ENCODE measurements at regions of chr6 and their contacts with region 1.

Region 1: GRCh38 chr6:87066449-87067333 is 28.2 kb downstream of the CGA start:
- DNase-seq: peak; percentile 30
- ATAC-seq: no peak
- H3K4me3 ChIP-seq: no peak overlapping the region
- H3K27ac ChIP-seq: no peak overlapping the region
- H3K4me1 ChIP-seq: no peaks in the 10 kb centered on the region
- H3K27me3 ChIP-seq: peaks cover 11% of the 10 kb centered on the region; the same call in 1 of the 2 replicates
- CTCF ChIP-seq: peak; percentile 68; the same call in 1 of the 2 replicates

Region 2: GRCh38 chr6:86848986-86849385 is 217.7 kb before region 1 on chr6:
- CTCF ChIA-PET with region 1: no interaction called
- POLR2A ChIA-PET with region 1: no interaction called
- in situ Hi-C with region 1: no loop called
- intact Hi-C with region 1: no loop called
- DNase-seq: no peak
- ATAC-seq: no peak
- H3K4me3 ChIP-seq: no peak overlapping the region
- H3K27ac ChIP-seq: no peak overlapping the region
- H3K4me1 ChIP-seq: no peaks in the 10 kb centered on the region
- H3K27me3 ChIP-seq: no peaks in the 10 kb centered on the region
- CTCF ChIP-seq: no peak

Region 3: DNA sequence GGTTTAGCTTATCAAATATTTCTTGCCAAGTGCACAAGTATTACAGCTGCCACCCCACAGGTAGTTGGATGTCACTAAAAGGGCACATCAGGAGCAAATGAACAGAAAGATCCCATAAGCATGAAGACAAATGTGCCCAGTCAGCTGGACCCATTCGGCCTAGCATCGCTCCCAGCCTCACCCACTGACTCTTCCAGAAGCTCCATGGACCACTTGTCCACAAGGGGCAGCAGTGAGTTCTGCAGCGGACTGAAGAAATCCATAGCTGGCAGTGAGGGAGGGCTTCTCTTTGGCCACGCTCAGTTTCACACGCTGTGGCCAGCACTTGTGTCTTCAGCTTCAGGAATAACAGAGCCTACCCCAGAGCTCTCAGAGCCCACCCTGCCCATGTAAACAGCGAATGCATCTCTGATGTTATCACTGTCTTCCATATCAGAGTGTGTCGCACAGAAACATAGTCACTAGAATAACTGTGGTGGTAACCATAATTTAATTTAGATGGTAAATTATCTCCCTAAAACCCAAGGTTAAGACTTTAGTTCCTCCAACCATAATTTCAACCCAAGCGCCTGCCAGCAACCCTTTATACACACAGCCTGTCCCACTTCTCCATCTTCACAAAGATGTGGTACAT is 12.4 kb after region 1 on chr6:
- CTCF ChIA-PET with region 1: interaction called, 17 read pairs
- POLR2A ChIA-PET with region 1: interaction called, 4 read pairs
- in situ Hi-C with region 1: no loop called
- intact Hi-C with region 1: no loop called
- DNase-seq: peak; percentile 42
- ATAC-seq: peak; percentile 98
- H3K4me3 ChIP-seq: no peak overlapping the region
- H3K27ac ChIP-seq: no peak overlapping the region
- H3K4me1 ChIP-seq: no peaks in the 10 kb centered on the region
- H3K27me3 ChIP-seq: peaks cover 6% of the 10 kb centered on the region; the same call in 1 of the 2 replicates
- CTCF ChIP-seq: peak; percentile 97

Region 4: DNA sequence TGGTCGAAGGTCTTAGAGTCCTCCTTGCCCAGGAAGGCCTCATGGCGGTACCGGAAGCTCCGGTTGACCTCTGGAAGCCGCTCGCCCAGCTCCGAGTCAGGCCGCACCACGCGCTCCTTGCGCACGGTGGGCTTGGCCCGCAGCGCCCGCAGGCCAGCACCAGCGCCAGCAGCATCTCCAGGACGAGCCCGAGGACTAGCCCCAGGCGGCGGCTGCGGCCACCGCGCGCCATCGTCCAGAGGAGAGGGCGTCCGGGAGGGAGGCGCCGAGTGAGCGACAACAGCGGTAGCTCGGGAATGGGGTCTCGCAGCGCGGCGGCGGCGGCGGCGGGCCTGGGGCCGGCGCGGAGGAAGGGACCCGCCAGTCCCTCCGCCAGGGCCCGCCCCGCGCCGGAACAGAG is 55.8 kb after region 1 on chr6:
- CTCF ChIA-PET with region 1: no interaction called
- POLR2A ChIA-PET with region 1: interaction called, 14 read pairs
- in situ Hi-C with region 1: no loop called
- intact Hi-C with region 1: no loop called
- DNase-seq: no peak
- ATAC-seq: no peak
- H3K4me3 ChIP-seq: no peak overlapping the region
- H3K27ac ChIP-seq: no peak overlapping the region
- H3K4me1 ChIP-seq: no peaks in the 10 kb centered on the region
- H3K27me3 ChIP-seq: peaks cover 2% of the 10 kb centered on the region; the same call in 1 of the 2 replicates
- CTCF ChIP-seq: no peak

Region 5: DNA sequence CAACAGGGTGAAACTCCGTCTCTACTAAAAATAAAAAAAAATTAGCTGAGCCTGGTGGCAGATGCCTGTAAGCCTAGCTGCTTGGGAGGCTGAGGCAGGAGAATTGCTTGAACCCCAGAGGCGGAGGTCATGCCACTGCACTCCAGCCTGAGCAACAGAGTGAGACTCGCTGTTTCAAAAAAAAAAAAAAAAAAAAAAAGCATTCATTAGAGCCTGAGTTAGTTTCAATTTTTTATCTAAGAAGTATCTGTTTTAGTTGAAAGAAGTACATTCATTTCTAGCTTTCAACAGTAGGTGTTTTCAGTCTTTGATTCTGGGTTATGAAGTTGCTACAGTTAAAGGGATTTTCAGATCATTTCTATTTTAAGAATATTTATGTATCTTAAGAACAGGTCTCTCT is 130.9 kb after region 1 on chr6:
- CTCF ChIA-PET with region 1: no interaction called
- POLR2A ChIA-PET with region 1: no interaction called
- in situ Hi-C with region 1: no loop called
- intact Hi-C with region 1: no loop called
- DNase-seq: no peak
- ATAC-seq: no peak
- H3K4me3 ChIP-seq: no peak overlapping the region
- H3K27ac ChIP-seq: no peak overlapping the region
- H3K4me1 ChIP-seq: no peaks in the 10 kb centered on the region
- H3K27me3 ChIP-seq: no peaks in the 10 kb centered on the region
- CTCF ChIP-seq: no peak

Region 6: DNA sequence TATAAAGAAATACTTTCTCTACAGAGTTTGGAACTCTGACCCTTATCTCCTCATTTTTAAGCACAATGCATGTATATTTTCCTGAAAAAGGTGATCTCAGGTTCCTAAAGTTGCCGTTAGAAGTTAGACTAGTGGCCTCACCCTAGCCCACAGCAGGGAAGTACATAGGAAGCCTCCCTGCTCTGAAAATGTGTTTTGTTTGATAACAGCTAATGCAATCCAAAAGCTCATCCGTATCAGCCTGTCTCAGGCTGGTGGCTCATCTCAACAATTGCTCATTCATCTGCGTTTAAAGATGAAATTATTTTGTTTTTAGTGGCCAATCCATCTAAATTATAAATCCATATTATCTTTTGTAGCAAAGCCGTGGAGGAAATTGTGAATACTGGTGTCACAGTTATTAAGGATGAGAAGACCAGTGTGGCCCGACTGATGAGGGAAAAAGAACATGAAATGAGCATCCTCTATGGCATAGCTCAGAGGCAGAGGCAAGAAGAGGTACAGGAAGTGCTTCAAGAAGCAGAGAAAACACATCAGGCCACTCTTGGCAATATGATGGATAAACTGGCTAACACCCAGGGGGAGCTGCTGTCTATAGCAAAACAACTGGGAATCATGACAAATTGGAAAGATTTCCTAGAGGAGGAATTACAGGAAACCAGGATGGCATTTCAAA is 298.0 kb after region 1 on chr6:
- CTCF ChIA-PET with region 1: interaction called, 13 read pairs
- POLR2A ChIA-PET with region 1: no interaction called
- in situ Hi-C with region 1: no loop called
- intact Hi-C with region 1: no loop called
- DNase-seq: no peak
- ATAC-seq: no peak
- H3K4me3 ChIP-seq: no peak overlapping the region
- H3K27ac ChIP-seq: no peak overlapping the region
- H3K4me1 ChIP-seq: no peaks in the 10 kb centered on the region
- H3K27me3 ChIP-seq: no peaks in the 10 kb centered on the region
- CTCF ChIP-seq: no peak

Region 7: DNA sequence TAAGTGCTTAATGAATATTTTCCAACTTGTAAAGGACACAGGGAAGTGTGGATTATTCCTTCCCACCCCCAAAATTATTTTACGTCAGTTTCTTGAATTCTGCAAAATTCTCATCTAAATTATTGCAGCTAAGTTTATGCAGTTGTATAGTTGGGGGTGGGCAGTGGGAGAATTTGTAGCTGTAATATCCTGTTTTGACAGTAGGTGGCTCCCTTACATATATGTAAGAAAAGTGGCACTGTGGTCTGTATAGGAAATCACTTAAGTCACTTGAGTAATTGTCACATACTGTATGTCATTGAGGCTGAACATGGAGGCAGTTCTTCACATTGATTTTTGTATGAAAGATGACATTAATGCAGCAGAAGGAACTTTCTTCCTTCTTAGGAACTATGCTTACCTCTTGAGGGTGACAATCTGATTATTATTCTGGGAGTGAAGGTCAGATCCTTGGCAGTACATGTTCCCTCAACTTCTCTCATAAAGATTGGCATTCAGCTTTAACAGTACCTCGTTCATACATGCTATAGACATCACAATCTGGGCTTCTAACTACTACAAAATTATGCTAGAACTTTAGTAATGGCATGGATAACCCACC is 326.4 kb after region 1 on chr6:
- CTCF ChIA-PET with region 1: no interaction called
- POLR2A ChIA-PET with region 1: no interaction called
- in situ Hi-C with region 1: no loop called
- intact Hi-C with region 1: loop called (anchors 5 kb)
- DNase-seq: peak; percentile 36
- ATAC-seq: peak; percentile 93
- H3K4me3 ChIP-seq: no peak overlapping the region
- H3K27ac ChIP-seq: no peak overlapping the region
- H3K4me1 ChIP-seq: no peaks in the 10 kb centered on the region
- H3K27me3 ChIP-seq: no peaks in the 10 kb centered on the region
- CTCF ChIP-seq: peak; percentile 76; the same call in 1 of the 2 replicates

Region 8: DNA sequence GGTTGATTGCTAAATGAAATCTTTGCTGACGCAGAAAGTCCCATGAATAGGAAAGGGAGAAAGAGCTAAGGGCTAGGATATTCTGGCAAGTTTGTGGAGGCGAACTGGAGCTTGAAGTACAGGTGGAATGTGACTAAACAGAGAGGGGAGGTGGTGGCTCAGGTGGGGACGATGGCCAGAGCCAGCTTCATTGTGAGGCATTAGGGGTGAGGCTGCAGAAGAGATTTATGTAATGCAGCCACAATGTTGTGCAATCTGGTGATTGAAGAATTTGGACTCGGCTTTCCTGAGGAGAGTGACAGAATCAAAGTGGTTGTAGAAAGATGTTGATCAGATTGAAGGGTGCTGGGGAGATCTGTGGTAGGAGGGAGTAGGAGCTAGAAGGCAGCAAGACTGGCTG is 938.0 kb after region 1 on chr6:
- CTCF ChIA-PET with region 1: interaction called, 10 read pairs
- POLR2A ChIA-PET with region 1: no interaction called
- in situ Hi-C with region 1: no loop called
- intact Hi-C with region 1: no loop called
- DNase-seq: no peak
- ATAC-seq: no peak
- H3K4me3 ChIP-seq: no peak overlapping the region
- H3K27ac ChIP-seq: no peak overlapping the region
- H3K4me1 ChIP-seq: no peaks in the 10 kb centered on the region
- H3K27me3 ChIP-seq: peaks cover 3% of the 10 kb centered on the region; the same call in 1 of the 2 replicates
- CTCF ChIP-seq: no peak